Left colon (tissue), 2 donors: ENCODE measurements at regions of chr10 and their contacts with region 1.

Region 1: GRCh38 chr10:119199231-119199992 is 8.0 kb upstream of the GRK5 start:
- DNase-seq: peak; percentile 50 to 57
- ATAC-seq: peak; percentile 98

Region 2: DNA sequence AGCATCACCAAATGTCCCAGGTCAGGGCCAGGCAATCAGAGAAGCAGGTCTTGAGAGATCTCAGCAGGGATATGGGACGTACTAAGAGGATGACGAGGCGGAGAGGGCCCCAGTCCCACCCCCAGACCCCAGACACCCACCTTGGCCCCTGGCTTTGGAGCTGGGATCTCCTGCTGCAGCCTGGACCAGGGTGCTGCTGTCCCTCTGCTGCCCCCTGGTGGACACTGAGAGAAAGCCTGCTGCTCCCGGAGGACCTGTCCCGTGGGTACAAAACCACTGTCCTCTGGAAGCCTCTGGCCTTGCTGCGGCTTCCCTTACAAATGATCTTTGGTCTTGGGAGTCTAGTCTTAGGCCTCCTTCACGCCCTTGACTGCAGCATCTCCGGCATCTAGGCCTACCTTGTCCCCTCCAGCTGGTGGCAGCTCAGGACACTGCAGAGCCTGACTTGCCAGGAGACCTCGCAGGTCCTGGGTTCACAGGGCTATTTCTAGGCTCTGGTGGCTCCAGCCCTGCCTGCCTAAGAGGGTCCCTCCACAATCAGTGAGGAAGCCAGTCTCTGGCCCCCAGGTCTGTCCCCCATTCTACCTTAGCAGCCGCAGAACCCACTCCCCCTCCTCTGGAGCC is 246.0 kb after region 1 on chr10:
- intact Hi-C with region 1: loop called (anchors 5 to 10 kb)
- DNase-seq: peak; percentile 73 to 84
- ATAC-seq: peak; percentile 91